ENCODE measurements at regions of chr19 and their contacts with region 1.

Region 1: DNA sequence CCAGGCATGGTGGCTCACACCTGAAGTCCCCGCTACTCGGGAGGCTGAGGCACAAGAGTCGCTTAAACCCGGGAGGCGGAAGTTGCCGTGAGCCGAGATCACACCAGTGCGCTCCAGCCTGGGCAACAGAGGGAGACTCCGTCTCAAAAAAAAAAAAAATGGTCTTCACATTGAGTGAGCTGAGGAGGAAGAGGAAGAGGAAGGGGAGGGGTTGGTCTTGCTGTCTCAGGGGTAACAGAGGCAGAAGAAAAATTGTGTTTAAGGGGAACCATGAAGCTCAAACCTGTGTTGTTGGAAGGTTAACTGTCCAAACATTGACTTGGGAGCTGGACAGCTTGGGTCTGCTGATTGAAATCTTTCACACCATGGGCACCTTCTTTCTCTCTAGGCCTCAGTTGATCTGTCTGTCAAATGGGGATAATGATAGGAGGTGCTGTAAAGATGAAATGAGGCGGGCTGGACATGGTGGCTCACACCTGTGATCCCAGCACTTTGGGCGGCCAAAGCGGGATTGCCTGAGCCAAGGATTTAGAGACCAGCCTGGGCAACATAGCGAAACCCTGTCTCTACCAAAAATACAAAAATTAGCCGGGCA is 9.8 kb upstream of the SLC44A2 start:
- DNase-seq: no peak
- H3K4me3 ChIP-seq: no peak overlapping the region
- H3K27ac ChIP-seq: no peak overlapping the region
- H3K4me1 ChIP-seq: peaks cover 13 to 23% of the 10 kb centered on the region in 2 donors
- H3K27me3 ChIP-seq: no peaks in the 10 kb centered on the region
- CTCF ChIP-seq: no peak
- POLR2A ChIP-seq: no peak

Region 2: DNA sequence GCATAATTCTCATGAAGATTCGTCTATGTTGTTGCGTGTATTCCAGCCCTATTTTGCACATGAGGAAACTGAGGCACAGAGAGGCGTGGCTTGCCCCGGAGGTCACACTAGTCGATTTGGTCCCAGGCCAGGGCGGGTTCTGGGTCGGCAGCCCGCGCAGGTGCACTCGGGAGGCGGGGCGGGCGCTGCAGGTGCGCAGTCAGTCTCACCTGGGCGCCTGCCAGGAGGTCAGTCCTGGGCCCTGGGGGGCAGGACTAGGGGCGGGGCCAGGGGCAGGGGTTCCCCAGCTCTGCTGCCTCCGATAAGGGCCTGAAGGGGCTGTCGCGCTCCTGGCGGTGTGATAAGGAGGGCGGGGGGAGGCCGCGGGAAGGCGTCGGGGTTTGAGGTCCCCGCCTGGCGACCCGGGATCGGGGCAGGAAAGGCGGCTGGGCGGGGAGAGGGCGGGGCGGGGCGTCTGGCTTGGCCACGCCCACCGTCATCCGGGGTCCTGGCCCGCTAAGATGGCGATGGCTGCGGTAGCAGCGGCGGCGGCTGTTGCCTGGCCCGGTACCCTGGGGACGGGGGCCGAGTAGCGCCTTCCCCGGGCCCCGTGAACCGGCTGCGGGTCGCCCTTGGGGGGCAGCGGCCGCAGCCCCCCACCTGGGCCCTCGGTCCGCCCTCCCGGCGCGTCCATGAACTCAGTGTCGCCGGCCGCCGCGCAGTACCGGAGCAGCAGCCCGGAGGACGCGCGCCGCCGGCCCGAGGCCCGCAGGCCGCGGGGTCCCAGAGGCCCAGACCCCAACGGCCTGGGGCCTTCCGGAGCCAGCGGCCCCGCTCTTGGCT is 71.9 kb before region 1 on chr19 and contains the start of gene ATG4D:
- intact Hi-C with region 1: no loop called
- DNase-seq: peak; percentile 67 to 86 (median 80)
- H3K4me3 ChIP-seq: peak within 1 kb of the TSS; percentile 59 to 84 (median 80)
- H3K27ac ChIP-seq: peak within 1 kb of the TSS; percentile 57 to 91 (median 90)
- H3K4me1 ChIP-seq: peaks cover 10 to 18% of the 10 kb centered on the region in 2 donors
- H3K27me3 ChIP-seq: no peaks in the 10 kb centered on the region
- CTCF ChIP-seq: no peak
- POLR2A ChIP-seq: peak; percentile 36 to 75
- total RNA-seq, gene ATG4D: 26.4 to 93.7 (median 37.8) TPM

Region 3: DNA sequence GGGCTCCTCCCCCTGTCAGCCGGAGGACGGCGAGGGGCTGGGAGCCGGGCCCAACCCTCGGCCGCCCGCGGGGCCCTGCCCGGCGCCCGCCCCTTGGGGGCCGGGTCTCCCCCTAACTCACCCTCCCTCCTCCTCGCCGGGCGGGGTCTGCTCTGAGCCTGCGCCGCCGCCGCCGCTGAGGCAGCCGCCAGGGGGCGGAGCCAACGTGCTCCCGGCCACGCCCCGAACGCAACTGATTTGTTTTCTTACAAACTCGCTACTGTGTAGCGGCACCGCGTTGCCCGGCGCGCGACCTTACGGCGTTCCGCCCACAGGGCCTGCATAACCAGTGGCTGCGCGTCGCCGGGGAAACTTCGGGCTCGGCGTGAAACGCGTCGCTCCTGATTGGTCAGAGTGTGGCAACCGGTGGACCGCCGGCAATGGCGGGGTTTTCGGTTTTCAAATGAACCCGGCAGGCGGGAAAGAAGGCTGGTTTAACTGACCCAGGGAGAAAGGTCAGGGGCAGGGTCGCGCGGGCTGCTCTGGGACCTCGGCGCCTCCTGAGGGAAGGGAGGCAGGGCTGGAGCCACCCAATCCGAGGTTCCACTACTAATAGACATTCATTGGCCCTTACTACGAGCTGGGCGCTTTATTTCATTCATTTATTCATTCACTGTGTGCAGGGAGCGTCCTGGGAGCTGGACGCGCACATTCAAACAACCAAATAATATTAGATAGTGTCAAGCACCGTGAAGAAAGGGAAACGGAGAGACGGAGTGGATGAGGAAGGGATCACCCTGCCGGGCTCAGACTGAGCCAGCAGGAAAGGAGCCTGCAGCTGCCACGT is 46.5 kb before region 1 on chr19 and contains the start of gene CDKN2D:
- intact Hi-C with region 1: no loop called
- DNase-seq: peak; percentile 99 to 100 (median 100)
- H3K4me3 ChIP-seq: peak within 1 kb of the TSS in 3 of 4 donors; percentile 11 to 80 (median 25)
- H3K27ac ChIP-seq: peak within 1 kb of the TSS in 3 of 5 donors; percentile 50 to 88 (median 65)
- H3K4me1 ChIP-seq: peaks cover 14 to 41% of the 10 kb centered on the region in 2 donors
- H3K27me3 ChIP-seq: no peaks in the 10 kb centered on the region
- CTCF ChIP-seq: peak; percentile 17 to 94 (median 58)
- POLR2A ChIP-seq: peak; percentile 66 to 83
- total RNA-seq, gene CDKN2D: 1.9 to 17.4 (median 6.5) TPM

Region 4: DNA sequence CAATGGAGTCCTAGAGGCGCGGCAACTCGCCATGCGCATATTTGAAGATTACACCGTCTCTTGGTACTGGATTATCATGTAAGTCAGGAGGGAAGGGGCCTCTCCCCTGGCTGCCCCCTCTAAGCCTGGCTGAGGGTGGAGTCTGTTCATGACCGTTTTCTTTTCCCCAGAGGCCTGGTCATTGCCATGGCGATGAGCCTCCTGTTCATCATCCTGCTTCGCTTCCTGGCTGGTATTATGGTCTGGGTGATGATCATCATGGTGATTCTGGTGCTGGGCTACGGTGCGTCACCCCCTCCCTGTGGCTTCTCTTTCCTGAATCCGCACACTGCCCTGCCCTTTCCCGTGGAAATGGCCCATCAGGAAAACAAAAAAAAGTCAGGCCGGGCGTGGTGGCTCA is 16.3 kb after region 1 on chr19:
- intact Hi-C with region 1: loop called in 1 of 2 experiments (anchors 2 kb)
- DNase-seq: no peak
- H3K4me3 ChIP-seq: no peak overlapping the region
- H3K27ac ChIP-seq: no peak overlapping the region
- H3K4me1 ChIP-seq: peaks cover 0 to 6% of the 10 kb centered on the region in 2 donors
- H3K27me3 ChIP-seq: no peaks in the 10 kb centered on the region
- CTCF ChIP-seq: no peak
- POLR2A ChIP-seq: no peak

Measured in adrenal gland (tissue), 19 donors.